Cardiac septum (tissue), 1 donor: ENCODE measurements at regions of chr22 and their contacts with region 1.

Region 1: DNA sequence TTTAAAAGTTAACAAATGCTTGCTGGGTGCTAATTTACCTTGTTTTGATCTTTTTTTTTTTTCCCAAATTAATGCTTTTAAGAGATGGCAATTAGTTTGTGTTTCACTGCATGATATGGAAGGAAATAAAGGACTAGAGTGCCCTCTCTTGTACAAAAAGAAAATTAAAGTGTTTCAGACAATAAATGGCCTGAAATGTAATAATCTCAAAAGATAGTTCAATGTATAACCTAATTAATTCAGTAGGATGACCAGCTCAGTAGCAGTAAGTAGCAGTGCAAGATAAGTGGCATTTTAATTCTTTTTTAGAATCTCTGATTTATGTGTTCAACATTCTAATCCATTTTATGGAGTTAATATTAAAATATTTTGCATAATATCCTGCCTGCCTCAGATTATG is 39.9 kb upstream of the MYO18B start:
- DNase-seq: no peak

Region 2: DNA sequence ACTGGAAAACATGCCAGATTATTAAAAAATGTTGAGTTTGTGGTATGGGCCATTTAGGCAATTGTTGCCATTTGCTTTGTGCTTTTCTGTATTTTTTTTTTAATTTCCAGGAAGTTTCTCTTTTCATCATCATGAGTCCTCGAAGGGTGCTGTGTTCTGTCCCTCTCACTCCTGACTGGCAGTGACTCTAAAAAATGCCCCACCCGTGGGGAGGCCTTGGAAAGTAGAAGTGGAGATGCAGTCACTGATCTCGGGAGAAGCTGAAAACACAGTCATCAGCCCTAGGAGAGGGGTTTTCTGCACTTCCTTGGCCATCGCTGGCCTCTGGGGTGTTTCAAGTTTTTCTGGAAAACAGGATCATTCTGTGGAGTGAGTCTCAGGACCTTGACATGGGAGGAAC is 236.1 kb before region 1 on chr22:
- intact Hi-C with region 1: loop called (anchors 2 kb)
- DNase-seq: no peak

Region 3: DNA sequence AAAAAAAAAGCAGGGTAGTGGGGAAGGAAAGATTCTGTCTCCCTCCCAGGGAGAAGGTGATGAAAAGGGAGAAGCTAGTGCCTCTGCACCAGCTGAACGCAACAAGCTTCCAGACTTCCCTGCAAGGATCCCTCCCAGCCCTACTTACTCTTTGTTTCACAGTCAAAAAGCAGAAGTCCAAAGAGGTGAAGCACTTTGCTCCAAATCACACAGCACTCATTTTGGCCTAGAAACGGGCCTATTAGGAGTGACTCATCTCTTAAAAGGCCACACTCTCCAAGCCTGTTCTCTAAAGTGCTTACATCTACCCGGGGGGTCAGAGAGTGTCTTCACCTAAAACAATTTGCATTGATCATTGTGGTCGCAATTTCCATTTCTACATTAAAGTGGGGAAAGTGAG is 155.3 kb before region 1 on chr22:
- intact Hi-C with region 1: no loop called
- DNase-seq: no peak